Dendritic cell treated with granulocyte-macrophage colony-stimulating factor and Interleukin-4, amounts not matched to agents 40 ng/mL and 50 ng/mL, for 4 days (primary cell): ENCODE measurements at regions of chr6 and their contacts with region 1.

Region 1: GRCh38 chr6:89242574-89243330 is 25.6 kb upstream of the GABRR1 start:
- H3K4me3 Mint-ChIP-seq: no peak overlapping the region
- H3K27ac Mint-ChIP-seq: no peak overlapping the region
- H3K4me1 Mint-ChIP-seq: peaks cover 15% of the 10 kb centered on the region
- H3K27me3 Mint-ChIP-seq: no peaks in the 10 kb centered on the region

Region 2: GRCh38 chr6:88982720-88983119 is 260.0 kb before region 1 on chr6:
- intact Hi-C with region 1: loop called (anchors 1 kb)
- H3K4me3 Mint-ChIP-seq: no peak overlapping the region
- H3K27ac Mint-ChIP-seq: no peak overlapping the region
- H3K4me1 Mint-ChIP-seq: peaks cover 9% of the 10 kb centered on the region
- H3K27me3 Mint-ChIP-seq: no peaks in the 10 kb centered on the region

Region 3: DNA sequence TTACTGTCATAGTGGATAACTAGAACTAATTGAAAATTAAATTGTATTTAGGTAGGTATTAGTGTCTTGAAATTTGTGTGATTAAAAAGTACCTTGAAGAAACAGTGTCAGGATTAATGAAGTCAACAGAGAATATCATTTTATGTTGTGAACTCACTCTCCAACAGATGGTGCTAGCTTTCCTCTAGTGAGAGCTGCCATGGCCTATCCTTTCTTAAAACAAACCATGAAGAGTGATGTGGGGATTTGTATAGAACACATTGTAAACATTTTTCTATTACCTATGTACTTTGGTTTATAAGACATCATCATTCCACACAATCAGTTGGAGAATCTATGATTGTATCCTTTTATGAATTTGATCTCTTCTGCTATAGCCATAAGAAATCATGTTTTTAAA is 120.1 kb before region 1 on chr6:
- intact Hi-C with region 1: loop called (anchors 5 kb)
- H3K4me3 Mint-ChIP-seq: no peak overlapping the region
- H3K27ac Mint-ChIP-seq: no peak overlapping the region
- H3K4me1 Mint-ChIP-seq: no peaks in the 10 kb centered on the region
- H3K27me3 Mint-ChIP-seq: peaks cover 13% of the 10 kb centered on the region

Region 4: DNA sequence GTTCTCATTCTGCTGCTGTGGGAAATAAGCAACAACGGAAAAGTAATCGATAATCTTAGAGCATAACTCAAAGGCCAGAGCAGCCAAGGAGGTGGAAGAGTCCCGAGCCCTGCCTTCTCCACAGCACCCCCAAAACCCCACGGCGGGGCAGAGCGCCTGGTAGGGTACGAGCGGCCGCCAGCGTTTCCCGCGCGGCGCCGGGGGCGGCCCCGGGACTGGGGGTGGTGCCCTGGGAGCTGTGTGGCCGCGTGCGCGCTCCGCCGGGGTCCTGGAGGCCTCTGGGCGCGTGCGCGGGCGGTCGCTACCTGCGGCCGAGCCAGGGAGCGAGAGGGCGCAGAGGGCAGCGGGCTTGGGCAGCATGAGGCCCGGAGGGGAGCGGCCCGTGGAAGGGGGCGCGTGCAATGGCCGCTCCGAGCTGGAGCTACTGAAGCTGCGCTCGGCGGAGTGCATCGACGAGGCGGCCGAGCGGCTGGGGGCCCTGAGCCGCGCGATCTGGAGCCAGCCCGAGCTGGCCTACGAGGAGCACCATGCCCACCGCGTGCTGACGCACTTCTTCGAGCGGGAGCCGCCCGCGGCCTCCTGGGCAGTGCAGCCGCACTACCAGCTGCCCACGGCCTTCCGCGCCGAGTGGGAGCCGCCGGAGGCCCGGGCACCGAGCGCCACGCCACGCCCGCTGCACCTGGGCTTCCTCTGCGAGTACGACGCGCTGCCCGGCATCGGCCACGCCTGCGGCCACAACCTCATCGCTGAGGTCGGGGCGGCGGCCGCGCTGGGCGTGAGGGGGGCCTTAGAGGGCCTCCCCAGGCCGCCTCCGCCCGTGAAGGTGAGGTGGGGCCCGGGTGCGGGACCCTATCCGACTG is 96.7 kb before region 1 on chr6 and contains the start of gene PM20D2:
- intact Hi-C with region 1: no loop called
- H3K4me3 Mint-ChIP-seq: peak within 1 kb of the TSS; percentile 78
- H3K27ac Mint-ChIP-seq: peak within 1 kb of the TSS; percentile 46
- H3K4me1 Mint-ChIP-seq: peaks cover 8% of the 10 kb centered on the region
- H3K27me3 Mint-ChIP-seq: no peaks in the 10 kb centered on the region